ENCODE measurements at regions of chr12 and their contacts with region 1.

Region 1: GRCh38 chr12:56189176-56189917 is at the start of gene SMARCC2:
- DNase-seq: peak; percentile 71 to 95 (median 80)
- ATAC-seq: peak; percentile 77
- H3K4me3 ChIP-seq: peak within 1 kb of the TSS; percentile 96
- H3K4me3 Mint-ChIP-seq: peak within 1 kb of the TSS; percentile 99
- H3K27ac ChIP-seq: peak within 1 kb of the TSS; percentile 87 to 93
- H3K27ac Mint-ChIP-seq: peak within 1 kb of the TSS; percentile 99
- H3K4me1 ChIP-seq: peaks cover 33% of the 10 kb centered on the region
- H3K4me1 Mint-ChIP-seq: peaks cover 46% of the 10 kb centered on the region
- H3K27me3 ChIP-seq: no peaks in the 10 kb centered on the region
- H3K27me3 Mint-ChIP-seq: peaks cover 5% of the 10 kb centered on the region
- CTCF ChIP-seq: peak; percentile 64
- total RNA-seq, gene SMARCC2: 104 to 109 TPM

Region 2: DNA sequence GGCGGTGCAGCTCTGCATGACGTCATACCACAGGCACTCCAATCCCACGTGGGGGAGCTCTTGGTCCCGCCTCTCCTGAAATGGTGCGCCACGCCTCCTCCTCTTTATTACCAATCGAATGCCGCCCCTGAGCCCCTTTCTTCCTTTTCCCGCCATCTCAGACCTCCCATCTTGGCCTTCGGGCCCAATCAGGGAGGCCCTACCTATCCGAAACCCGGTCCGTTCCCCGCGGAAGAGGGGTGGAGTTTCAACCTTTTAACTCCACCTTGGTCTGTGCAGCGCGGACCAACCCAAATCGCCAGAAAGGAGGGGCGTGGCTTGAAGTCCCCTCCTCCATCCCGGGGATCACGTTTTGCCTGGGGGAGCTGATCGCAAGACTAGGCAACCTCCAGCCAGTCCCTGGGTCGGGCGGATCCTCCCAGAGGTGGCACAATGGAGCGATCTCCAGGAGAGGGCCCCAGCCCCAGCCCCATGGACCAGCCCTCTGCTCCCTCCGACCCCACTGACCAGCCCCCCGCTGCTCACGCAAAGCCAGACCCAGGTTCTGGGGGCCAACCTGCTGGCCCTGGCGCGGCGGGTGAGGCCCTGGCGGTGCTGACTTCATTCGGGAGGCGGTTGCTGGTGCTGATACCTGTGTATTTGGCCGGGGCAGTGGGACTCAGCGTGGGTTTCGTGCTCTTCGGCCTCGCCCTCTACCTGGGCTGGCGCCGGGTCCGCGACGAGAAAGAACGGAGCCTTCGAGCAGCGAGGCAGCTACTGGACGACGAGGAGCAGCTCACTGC is 61.3 kb before region 1 on chr12 and contains the start of gene ESYT1:
- CTCF ChIA-PET with region 1: interaction called, 138 read pairs
- POLR2A ChIA-PET with region 1: interaction called, 113 read pairs
- intact Hi-C with region 1: loop called (anchors 1 to 2 kb)
- DNase-seq: peak; percentile 93 to 100 (median 96)
- ATAC-seq: peak; percentile 90
- H3K4me3 ChIP-seq: peak within 1 kb of the TSS; percentile 99
- H3K4me3 Mint-ChIP-seq: peak within 1 kb of the TSS; percentile 97
- H3K27ac ChIP-seq: peak within 1 kb of the TSS; percentile 77
- H3K27ac Mint-ChIP-seq: peak within 1 kb of the TSS; percentile 86
- H3K4me1 ChIP-seq: peaks cover 66% of the 10 kb centered on the region
- H3K4me1 Mint-ChIP-seq: peaks cover 69% of the 10 kb centered on the region
- H3K27me3 ChIP-seq: no peaks in the 10 kb centered on the region
- H3K27me3 Mint-ChIP-seq: no peaks in the 10 kb centered on the region
- CTCF ChIP-seq: no peak
- total RNA-seq, gene ESYT1: 88.5 to 90.3 TPM

Region 3: GRCh38 chr12:56152318-56153033 is 36.9 kb before region 1 on chr12 and contains the start of gene MYL6B:
- CTCF ChIA-PET with region 1: interaction called, 23 read pairs
- POLR2A ChIA-PET with region 1: interaction called, 22 read pairs
- intact Hi-C with region 1: loop called (anchors 2 to 5 kb)
- DNase-seq: peak; percentile 85 to 96 (median 91)
- ATAC-seq: peak; percentile 88
- H3K4me3 ChIP-seq: peak within 1 kb of the TSS; percentile 76
- H3K4me3 Mint-ChIP-seq: peak within 1 kb of the TSS; percentile 94
- H3K27ac ChIP-seq: peak within 1 kb of the TSS; percentile 75 to 87
- H3K27ac Mint-ChIP-seq: peak within 1 kb of the TSS; percentile 94
- H3K4me1 ChIP-seq: peaks cover 31% of the 10 kb centered on the region
- H3K4me1 Mint-ChIP-seq: peaks cover 29% of the 10 kb centered on the region
- H3K27me3 ChIP-seq: no peaks in the 10 kb centered on the region
- H3K27me3 Mint-ChIP-seq: no peaks in the 10 kb centered on the region
- CTCF ChIP-seq: no peak
- total RNA-seq, gene MYL6B: 6.2 to 6.4 TPM

Region 4: GRCh38 chr12:56206457-56207166 is 17.3 kb after region 1 on chr12:
- CTCF ChIA-PET with region 1: interaction called, 14 read pairs
- POLR2A ChIA-PET with region 1: interaction called, 5 read pairs
- intact Hi-C with region 1: no loop called
- DNase-seq: peak in 11 of 14 experiments; percentile 17 to 64 (median 25)
- ATAC-seq: peak; percentile 65
- H3K4me3 ChIP-seq: no peak overlapping the region
- H3K4me3 Mint-ChIP-seq: no peak overlapping the region
- H3K27ac ChIP-seq: no peak overlapping the region
- H3K27ac Mint-ChIP-seq: peak overlapping the region; percentile 40
- H3K4me1 ChIP-seq: no peaks in the 10 kb centered on the region
- H3K4me1 Mint-ChIP-seq: peaks cover 6% of the 10 kb centered on the region
- H3K27me3 ChIP-seq: no peaks in the 10 kb centered on the region
- H3K27me3 Mint-ChIP-seq: no peaks in the 10 kb centered on the region
- CTCF ChIP-seq: no peak

Region 5: GRCh38 chr12:56299853-56300643 is 110.7 kb after region 1 on chr12 and contains the start of gene CS:
- CTCF ChIA-PET with region 1: interaction called, 3 read pairs
- POLR2A ChIA-PET with region 1: interaction called, 7 read pairs
- intact Hi-C with region 1: loop called in 1 of 2 experiments (anchors 2 kb)
- DNase-seq: peak; percentile 95 to 99 (median 98)
- ATAC-seq: peak; percentile 91
- H3K4me3 ChIP-seq: peak within 1 kb of the TSS; percentile 72
- H3K4me3 Mint-ChIP-seq: peak within 1 kb of the TSS; percentile 98
- H3K27ac ChIP-seq: peak within 1 kb of the TSS; percentile 91 to 96
- H3K27ac Mint-ChIP-seq: peak within 1 kb of the TSS; percentile 97
- H3K4me1 ChIP-seq: peaks cover 56% of the 10 kb centered on the region
- H3K4me1 Mint-ChIP-seq: peaks cover 68% of the 10 kb centered on the region
- H3K27me3 ChIP-seq: no peaks in the 10 kb centered on the region
- H3K27me3 Mint-ChIP-seq: no peaks in the 10 kb centered on the region
- CTCF ChIP-seq: no peak
- total RNA-seq, gene CS: 139 to 145 TPM